ENCODE measurements at regions of chr7 and their contacts with region 1.

Region 1: GRCh38 chr7:24401628-24402593 is 117.9 kb downstream of the NPY start:
- DNase-seq: no peak
- H3K4me3 ChIP-seq: peak overlapping the region in 1 of 2 donors; percentile 42
- H3K27ac ChIP-seq: no peak overlapping the region
- H3K4me1 ChIP-seq: no peaks in the 10 kb centered on the region
- H3K27me3 ChIP-seq: no peaks in the 10 kb centered on the region
- CTCF ChIP-seq: peak in 2 of 3 experiments; percentile 34 to 55

Region 2: DNA sequence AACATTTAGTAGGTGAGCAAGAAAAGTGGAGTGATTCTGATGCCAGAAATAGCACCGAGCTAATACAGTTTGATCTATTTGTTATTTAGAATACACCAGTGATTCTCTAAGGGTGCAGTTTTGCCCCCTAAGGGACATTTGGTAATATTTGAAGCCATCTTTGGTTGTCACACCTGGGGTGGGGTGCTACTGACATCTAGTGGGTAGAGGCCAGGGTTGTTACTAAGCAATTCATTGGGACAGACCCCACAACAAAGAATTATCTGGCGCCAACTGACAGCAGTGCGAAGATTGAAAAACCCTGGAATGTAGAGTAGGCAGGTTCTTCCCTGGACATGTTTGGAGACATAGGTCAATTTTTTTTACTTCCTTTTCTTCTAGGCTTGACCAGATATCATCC is 185.9 kb after region 1 on chr7:
- intact Hi-C with region 1: loop called (anchors 2 kb)
- DNase-seq: no peak
- H3K4me3 ChIP-seq: no peak overlapping the region
- H3K27ac ChIP-seq: no peak overlapping the region
- H3K4me1 ChIP-seq: no peaks in the 10 kb centered on the region
- H3K27me3 ChIP-seq: no peaks in the 10 kb centered on the region
- CTCF ChIP-seq: peak; percentile 21 to 51 (median 33)

Region 3: DNA sequence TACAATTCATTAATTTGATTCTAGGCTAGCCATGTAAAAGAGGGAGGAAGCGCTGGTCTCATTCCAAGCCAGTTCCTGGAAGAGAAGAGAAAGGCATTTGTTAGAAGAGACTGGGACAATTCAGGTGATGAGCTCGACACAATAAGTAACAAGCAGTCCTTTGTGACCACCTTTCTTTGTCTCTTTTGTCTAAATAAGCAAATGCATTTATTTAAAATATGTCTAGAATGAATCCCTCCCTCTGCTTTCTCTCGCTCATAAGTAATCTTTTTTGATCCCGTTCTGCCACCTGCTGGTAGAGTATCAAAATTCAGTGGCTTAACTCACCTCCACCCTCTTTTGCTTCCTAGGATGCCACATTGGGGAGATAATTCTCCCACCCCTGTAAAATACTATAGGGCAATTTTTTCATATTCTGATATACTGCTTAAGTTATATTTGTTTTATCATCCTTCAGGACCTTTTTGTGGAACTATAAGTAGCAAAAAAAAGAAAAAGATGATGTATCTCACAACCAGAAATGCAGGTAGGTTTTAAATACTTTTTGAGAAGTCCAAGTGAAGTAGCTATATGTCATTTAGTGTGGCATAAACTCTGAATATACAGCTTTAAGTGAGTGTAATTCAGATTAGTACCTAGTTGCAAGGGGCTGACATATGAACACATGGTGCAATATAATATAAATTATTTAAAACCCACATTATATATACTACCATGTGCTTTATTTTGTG is 263.8 kb after region 1 on chr7:
- intact Hi-C with region 1: loop called (anchors 1 kb)
- DNase-seq: no peak
- H3K4me3 ChIP-seq: no peak overlapping the region
- H3K27ac ChIP-seq: no peak overlapping the region
- H3K4me1 ChIP-seq: no peaks in the 10 kb centered on the region
- H3K27me3 ChIP-seq: no peaks in the 10 kb centered on the region
- CTCF ChIP-seq: peak; percentile 36 to 71 (median 52)

Measured in ascending aorta (tissue), 2 donors.